GM12878 (cell line): ENCODE measurements at regions of chr3 and their contacts with region 1.

Region 1: DNA sequence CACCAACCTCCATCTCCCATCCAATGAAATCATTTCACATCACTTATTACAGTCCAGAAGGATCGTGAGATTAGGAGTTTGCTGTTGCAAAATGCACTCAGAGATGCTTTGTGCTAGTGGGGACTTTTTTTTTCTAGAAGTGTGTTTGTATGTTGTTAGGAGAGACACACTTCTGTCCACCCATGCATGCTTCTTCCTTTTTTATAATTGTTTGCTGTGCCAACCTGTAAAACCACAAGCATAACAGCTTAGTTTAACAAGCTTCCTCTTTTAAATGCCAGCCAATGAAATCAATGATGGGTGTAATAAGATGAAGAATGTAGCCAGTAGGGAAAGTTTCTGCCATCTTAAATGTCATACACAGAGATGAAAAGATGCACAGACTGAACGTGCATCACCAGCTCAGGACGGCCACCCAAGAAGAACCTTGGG is 305.6 kb upstream of the STT3B start:
- DNase-seq: peak; percentile 80
- ATAC-seq: peak; percentile 80
- H3K4me3 ChIP-seq: no peak overlapping the region
- H3K27ac ChIP-seq: peak overlapping the region; percentile 44
- H3K4me1 ChIP-seq: peaks cover 45% of the 10 kb centered on the region
- H3K27me3 ChIP-seq: no peaks in the 10 kb centered on the region
- CTCF ChIP-seq: no peak
- EP300 ChIP-seq: peak in 1 of 2 experiments; percentile 75; a peak in 2 of 4 replicates
- POLR2A ChIP-seq: no peak
- RAD21 ChIP-seq: no peak

Region 2: GRCh38 chr3:31213869-31214486 is 13.2 kb before region 1 on chr3:
- CTCF ChIA-PET with region 1: interaction called, 17 read pairs
- POLR2A ChIA-PET with region 1: interaction called, 6 read pairs
- RAD21 ChIA-PET with region 1: interaction called, 21 read pairs
- SMC1A ChIA-PET with region 1: interaction called, 76 read pairs
- in situ Hi-C with region 1: no loop called
- intact Hi-C with region 1: no loop called
- DNase-seq: peak; percentile 79
- ATAC-seq: peak; percentile 77
- H3K4me3 ChIP-seq: peak overlapping the region; percentile 40; the same call in 1 of the 2 replicates
- H3K27ac ChIP-seq: peak overlapping the region; percentile 67
- H3K4me1 ChIP-seq: peaks cover 31% of the 10 kb centered on the region
- H3K27me3 ChIP-seq: no peaks in the 10 kb centered on the region
- CTCF ChIP-seq: no peak
- EP300 ChIP-seq: peak; percentile 25 to 67; a peak in 2 of 4 replicates
- POLR2A ChIP-seq: no peak
- RAD21 ChIP-seq: no peak